K562 (cell line): ENCODE measurements at regions of chr20 and their contacts with region 1.

Region 1: GRCh38 chr20:31260326-31260932 is 3.0 kb downstream of the DEFB115 start:
- DNase-seq: peak; percentile 44 to 58 (median 50)
- ATAC-seq: peak; percentile 88
- H3K4me3 ChIP-seq: no peak overlapping the region
- H3K27ac ChIP-seq: no peak overlapping the region
- H3K4me1 ChIP-seq: no peaks in the 10 kb centered on the region
- H3K27me3 ChIP-seq: no peaks in the 10 kb centered on the region
- CTCF ChIP-seq: peak; percentile 29 to 74 (median 70); a peak in 5 of 6 replicates
- EP300 ChIP-seq: no peak
- POLR2A ChIP-seq: no peak
- RAD21 ChIP-seq: peak; percentile 47 to 73

Region 2: GRCh38 chr20:29750268-29750899 is 1510.0 kb before region 1 on chr20:
- CTCF ChIA-PET with region 1: no interaction called
- POLR2A ChIA-PET with region 1: no interaction called
- in situ Hi-C with region 1: loop called (anchors 25 kb)
- intact Hi-C with region 1: no loop called
- DNase-seq: no peak
- ATAC-seq: no peak
- H3K4me3 ChIP-seq: no peak overlapping the region
- H3K27ac ChIP-seq: no peak overlapping the region
- H3K4me1 ChIP-seq: no peaks in the 10 kb centered on the region; a peak in 1 of 5 replicates
- H3K27me3 ChIP-seq: no peaks in the 10 kb centered on the region
- CTCF ChIP-seq: no peak
- EP300 ChIP-seq: no peak
- POLR2A ChIP-seq: no peak
- RAD21 ChIP-seq: no peak

Region 3: GRCh38 chr20:31308535-31309162 is 48.2 kb after region 1 on chr20 and contains the start of gene DEFB116:
- CTCF ChIA-PET with region 1: no interaction called
- POLR2A ChIA-PET with region 1: no interaction called
- in situ Hi-C with region 1: no loop called
- intact Hi-C with region 1: loop called (anchors 5 kb)
- DNase-seq: no peak
- ATAC-seq: no peak
- H3K4me3 ChIP-seq: no peak within 1 kb of the TSS
- H3K27ac ChIP-seq: no peak within 1 kb of the TSS
- H3K4me1 ChIP-seq: no peaks in the 10 kb centered on the region
- H3K27me3 ChIP-seq: no peaks in the 10 kb centered on the region
- CTCF ChIP-seq: no peak
- EP300 ChIP-seq: no peak
- POLR2A ChIP-seq: no peak
- RAD21 ChIP-seq: no peak
- polyA plus RNA-seq, gene DEFB116: not detected